ENCODE measurements at regions of chr12 and their contacts with region 1.

Region 1: GRCh38 chr12:31662176-31662849 is 2.8 kb downstream of the ETFBKMT start:
- DNase-seq: no peak
- H3K4me3 ChIP-seq: no peak overlapping the region
- H3K27ac ChIP-seq: no peak overlapping the region
- H3K4me1 ChIP-seq: peaks cover 4 to 15% (median 9%) of the 10 kb centered on the region in 4 experiments
- H3K27me3 ChIP-seq: no peaks in the 10 kb centered on the region

Region 2: GRCh38 chr12:31682136-31682962 is 20.0 kb after region 1 on chr12:
- CTCF ChIA-PET with region 1: interaction called, 11 read pairs
- POLR2A ChIA-PET with region 1: no interaction called
- DNase-seq: peak; percentile 88 to 94 (median 91)
- H3K4me3 ChIP-seq: no peak overlapping the region
- H3K27ac ChIP-seq: no peak overlapping the region
- H3K4me1 ChIP-seq: peaks cover 0 to 11% (median 6%) of the 10 kb centered on the region in 4 experiments
- H3K27me3 ChIP-seq: no peaks in the 10 kb centered on the region

Measured in common myeloid progenitor, CD34-positive (primary cell).